ENCODE measurements at regions of chr14 and their contacts with region 1.

Region 1: DNA sequence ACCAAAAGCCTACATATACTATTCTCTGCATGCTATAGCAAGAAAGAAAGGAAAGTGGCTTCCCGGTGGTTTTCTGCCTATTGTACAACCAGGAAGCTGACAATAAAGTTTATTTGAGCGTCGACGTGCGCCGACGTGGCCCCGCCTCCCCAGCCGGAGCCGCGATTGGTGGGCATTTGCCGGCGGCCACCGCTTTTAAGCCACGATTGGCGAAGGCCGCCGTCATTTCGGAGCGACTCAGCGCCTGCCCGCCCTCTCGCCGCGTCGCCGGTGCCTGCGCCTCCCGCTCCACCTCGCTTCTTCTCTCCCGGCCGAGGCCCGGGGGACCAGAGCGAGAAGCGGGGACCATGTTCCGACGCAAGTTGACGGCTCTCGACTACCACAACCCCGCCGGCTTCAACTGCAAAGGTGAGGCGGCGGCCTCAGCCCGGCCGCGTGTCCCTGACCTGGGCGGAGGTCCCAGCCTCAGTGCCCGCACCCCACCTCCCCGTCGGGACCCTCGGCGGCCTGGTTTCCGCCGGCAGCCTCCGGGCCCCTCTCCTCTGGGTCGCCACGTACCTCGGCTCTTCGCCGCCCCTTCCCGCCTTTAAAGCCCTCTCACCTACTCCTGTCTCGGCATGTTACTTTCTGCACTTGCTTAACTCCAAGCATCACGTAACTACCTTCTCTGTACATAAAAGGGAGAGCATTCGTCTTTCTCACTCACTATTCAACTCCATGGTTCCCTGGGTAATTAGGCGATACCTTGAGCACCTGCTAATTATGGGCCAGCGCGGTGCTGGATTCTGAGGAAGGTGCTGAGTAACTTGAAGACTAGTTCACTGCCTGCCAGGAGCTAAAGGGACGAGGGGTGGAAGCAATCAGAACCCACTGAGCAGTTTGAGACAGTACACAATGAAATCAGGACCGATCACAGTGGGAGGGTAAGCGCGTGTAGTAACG is at the start of gene RTRAF:
- DNase-seq: peak; percentile 59 to 96
- H3K4me3 ChIP-seq: peak within 1 kb of the TSS; percentile 89 to 94
- H3K27ac ChIP-seq: peak within 1 kb of the TSS; percentile 86 to 94
- H3K4me1 ChIP-seq: peaks cover 0 to 3% of the 10 kb centered on the region in 2 donors
- H3K27me3 ChIP-seq: no peaks in the 10 kb centered on the region
- CTCF ChIP-seq: no peak
- total RNA-seq, gene RTRAF: 15.3 TPM

Region 2: GRCh38 chr14:52031781-52032180 is 42.2 kb after region 1 on chr14:
- intact Hi-C with region 1: loop called (anchors 2 kb)
- DNase-seq: peak; percentile 53 to 90
- H3K4me3 ChIP-seq: peak overlapping the region in 1 of 2 donors; percentile 3
- H3K27ac ChIP-seq: peak overlapping the region; percentile 41 to 68
- H3K4me1 ChIP-seq: peaks cover 0 to 11% of the 10 kb centered on the region in 2 donors
- H3K27me3 ChIP-seq: no peaks in the 10 kb centered on the region
- CTCF ChIP-seq: no peak